ENCODE measurements at regions of chr11 and their contacts with region 1.

Region 1: GRCh38 chr11:128336203-128336602 is 251.2 kb downstream of the ETS1 start:
- DNase-seq: peak; percentile 98
- ATAC-seq: peak; percentile 52
- H3K4me3 ChIP-seq: no peak overlapping the region
- H3K27ac ChIP-seq: peak overlapping the region; percentile 96
- H3K4me1 ChIP-seq: peaks cover 51% of the 10 kb centered on the region
- H3K27me3 ChIP-seq: no peaks in the 10 kb centered on the region
- CTCF ChIP-seq: no peak

Region 2: GRCh38 chr11:128290106-128290840 is 45.9 kb before region 1 on chr11:
- CTCF ChIA-PET with region 1: no interaction called
- POLR2A ChIA-PET with region 1: interaction called, 5 read pairs
- intact Hi-C with region 1: loop called (anchors 1 kb)
- DNase-seq: peak; percentile 94
- ATAC-seq: peak; percentile 82
- H3K4me3 ChIP-seq: no peak overlapping the region
- H3K27ac ChIP-seq: peak overlapping the region; percentile 53
- H3K4me1 ChIP-seq: peaks cover 39% of the 10 kb centered on the region
- H3K27me3 ChIP-seq: no peaks in the 10 kb centered on the region
- CTCF ChIP-seq: peak; percentile 97

Region 3: DNA sequence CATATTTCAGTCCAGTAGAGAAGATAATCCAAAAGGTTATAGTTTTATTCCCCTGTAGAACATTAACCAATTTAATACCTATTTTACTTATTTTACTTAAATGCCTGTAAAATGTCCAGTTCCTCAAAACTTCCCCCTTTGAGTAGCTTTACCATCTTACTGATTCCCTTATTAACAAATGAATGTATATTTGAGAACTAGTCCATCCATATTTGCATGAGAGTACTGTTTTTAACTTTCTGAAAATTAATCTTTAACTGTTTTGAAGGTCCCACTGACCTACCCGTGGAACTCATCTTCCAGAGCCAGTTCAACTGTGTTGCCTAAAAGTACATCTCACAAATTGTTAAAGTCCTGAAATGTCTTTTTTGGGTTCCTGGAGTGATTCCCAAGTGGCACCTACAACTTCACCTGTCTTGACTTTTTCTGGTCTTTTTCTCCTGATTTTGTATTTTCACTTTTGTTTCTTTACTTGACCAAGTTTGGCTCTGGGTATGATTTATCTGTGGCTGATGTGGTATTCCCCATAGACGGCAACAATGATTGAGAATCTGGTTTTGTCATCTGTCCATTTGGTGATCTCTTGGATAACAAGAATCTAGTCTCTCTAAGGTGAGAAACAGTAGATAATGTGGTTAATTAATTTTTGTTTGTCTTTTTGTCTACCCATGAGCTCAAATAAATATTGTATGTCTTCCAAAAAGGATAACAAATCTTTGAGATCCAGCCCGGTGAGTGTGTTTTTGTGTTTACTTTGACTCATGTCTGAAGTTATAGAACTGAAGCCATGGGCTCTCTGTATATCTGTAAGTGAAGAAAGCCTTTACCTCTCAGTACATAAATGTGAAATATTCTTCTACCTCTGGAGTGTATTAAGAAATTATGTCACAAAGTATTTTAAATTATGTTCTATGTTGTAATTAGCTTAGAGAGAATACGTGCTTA is 76.9 kb after region 1 on chr11:
- CTCF ChIA-PET with region 1: no interaction called
- POLR2A ChIA-PET with region 1: interaction called, 4 read pairs
- intact Hi-C with region 1: loop called (anchors 2 kb)
- DNase-seq: peak; percentile 91
- ATAC-seq: peak; percentile 80
- H3K4me3 ChIP-seq: no peak overlapping the region
- H3K27ac ChIP-seq: peak overlapping the region; percentile 5
- H3K4me1 ChIP-seq: peaks cover 56% of the 10 kb centered on the region
- H3K27me3 ChIP-seq: no peaks in the 10 kb centered on the region
- CTCF ChIP-seq: no peak

Region 4: DNA sequence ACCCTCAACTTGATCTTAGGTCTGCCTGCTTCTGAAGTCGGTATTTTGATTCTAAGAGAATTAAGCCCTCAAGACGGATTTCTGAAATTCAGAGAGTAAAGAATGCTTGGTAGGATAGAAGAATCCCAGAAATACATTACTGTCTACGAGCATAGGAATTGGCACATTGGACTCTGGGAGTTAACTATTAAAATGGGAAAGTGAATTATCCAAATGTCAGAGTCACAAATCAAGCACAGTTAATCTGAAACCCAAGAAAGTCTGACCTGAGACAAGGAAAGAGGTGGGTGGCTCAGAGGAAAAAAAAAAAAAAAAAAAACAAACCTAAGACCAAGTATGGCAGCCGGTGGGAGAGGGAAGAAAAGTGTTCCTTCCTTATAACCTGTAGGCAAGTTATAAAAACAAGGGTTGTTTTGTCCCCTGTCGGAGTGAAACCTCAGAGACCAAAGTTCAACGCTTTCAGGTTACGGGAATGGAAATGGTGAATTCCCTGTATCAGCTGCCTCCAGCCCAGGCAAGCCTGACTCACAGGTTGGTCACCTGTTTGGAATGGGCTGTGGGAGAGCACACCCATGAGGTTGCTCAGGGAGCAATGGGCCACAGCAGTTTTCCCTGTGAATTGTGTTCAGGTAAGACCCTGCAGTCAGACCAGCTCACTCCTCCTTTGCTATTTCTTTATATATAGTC is 112.1 kb after region 1 on chr11:
- CTCF ChIA-PET with region 1: interaction called, 5 read pairs
- POLR2A ChIA-PET with region 1: interaction called, 4 read pairs
- intact Hi-C with region 1: loop called (anchors 1 kb)
- DNase-seq: peak; percentile 100
- ATAC-seq: peak; percentile 97
- H3K4me3 ChIP-seq: peak overlapping the region; percentile 43; the same call in 1 of the 2 replicates
- H3K27ac ChIP-seq: peak overlapping the region; percentile 91
- H3K4me1 ChIP-seq: peaks cover 31% of the 10 kb centered on the region
- H3K27me3 ChIP-seq: no peaks in the 10 kb centered on the region
- CTCF ChIP-seq: peak; percentile 65

Region 5: DNA sequence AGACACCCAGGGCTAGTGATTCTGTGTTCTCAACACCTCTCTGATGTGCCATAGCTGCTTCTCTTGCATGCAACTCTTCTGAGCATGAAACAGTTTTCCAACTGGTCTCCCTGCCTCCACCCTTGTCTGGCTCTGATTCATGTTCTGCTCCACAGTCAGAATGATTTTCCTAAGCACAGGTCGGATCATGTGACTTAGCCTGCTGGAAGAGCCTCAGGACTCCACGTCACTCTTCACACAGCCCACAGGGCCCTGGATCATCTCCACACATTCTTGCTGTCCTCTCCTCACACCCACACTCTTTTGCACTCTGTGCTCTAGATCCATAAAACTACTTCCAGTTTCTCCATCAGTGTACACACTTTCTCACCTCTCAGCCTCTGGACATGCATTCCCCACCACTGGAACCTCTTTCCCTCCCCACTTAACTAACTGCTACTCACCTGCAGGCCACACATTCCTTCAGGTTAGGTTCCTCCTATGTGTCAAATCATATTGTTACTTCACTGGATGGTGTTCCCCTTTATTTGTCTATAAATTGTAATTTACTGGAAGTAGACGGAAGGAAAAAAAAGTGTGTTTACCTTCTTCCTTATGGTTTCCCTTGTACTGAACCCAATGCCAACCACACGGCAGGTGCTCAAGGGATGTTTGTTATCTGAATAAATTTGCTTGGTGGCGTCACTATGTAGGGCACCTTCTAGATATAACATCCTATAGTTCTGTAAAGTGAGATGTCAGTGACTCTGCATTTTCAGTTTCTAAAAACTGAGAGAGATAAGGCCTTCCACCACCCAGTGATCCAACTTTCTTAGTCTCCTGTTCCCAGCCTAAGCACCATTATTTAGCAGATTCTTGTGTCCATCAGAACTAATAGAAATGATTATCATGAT is 117.5 kb after region 1 on chr11:
- CTCF ChIA-PET with region 1: interaction called, 5 read pairs
- POLR2A ChIA-PET with region 1: interaction called, 4 read pairs
- intact Hi-C with region 1: loop called (anchors 1 kb)
- DNase-seq: peak; percentile 88
- ATAC-seq: peak; percentile 48
- H3K4me3 ChIP-seq: no peak overlapping the region
- H3K27ac ChIP-seq: peak overlapping the region; percentile 64
- H3K4me1 ChIP-seq: peaks cover 38% of the 10 kb centered on the region
- H3K27me3 ChIP-seq: no peaks in the 10 kb centered on the region
- CTCF ChIP-seq: no peak

Region 6: DNA sequence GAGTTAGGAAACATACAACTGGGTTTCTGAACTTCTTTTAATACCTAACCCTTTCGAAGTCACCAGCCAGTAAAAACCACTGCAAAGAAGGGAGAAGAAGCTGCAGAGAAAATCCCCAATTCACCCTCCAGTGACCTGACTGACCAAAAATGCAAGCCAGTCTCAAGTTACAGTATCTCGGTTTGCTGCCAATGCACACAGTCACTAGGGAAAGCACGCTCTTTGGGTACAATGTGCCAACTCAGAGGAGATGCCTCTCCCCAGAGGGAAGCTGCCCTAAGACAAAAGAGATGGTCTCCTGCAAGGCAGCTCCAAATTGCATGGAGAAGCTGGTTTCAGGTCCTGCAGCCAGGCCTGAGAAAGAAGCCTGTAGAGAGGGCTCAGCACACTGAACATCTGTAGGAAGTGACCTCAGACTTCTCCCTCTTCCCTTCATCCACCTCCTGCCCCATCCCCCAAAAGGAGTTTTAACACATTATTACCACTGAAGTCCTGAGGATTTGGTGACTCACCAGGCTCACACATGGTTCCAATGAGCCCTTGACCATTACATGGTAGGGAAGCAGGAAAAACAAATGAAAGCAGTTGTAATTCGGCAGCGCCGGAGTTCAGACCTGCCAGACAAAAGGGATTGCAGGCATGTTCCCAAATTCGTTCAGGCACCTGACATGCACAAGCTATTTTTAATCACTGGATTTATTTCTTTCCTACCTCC is 161.0 kb after region 1 on chr11:
- CTCF ChIA-PET with region 1: no interaction called
- POLR2A ChIA-PET with region 1: interaction called, 4 read pairs
- intact Hi-C with region 1: loop called (anchors 10 kb)
- DNase-seq: peak; percentile 97
- ATAC-seq: peak; percentile 74
- H3K4me3 ChIP-seq: peak overlapping the region; percentile 62
- H3K27ac ChIP-seq: peak overlapping the region; percentile 91
- H3K4me1 ChIP-seq: peaks cover 97% of the 10 kb centered on the region
- H3K27me3 ChIP-seq: no peaks in the 10 kb centered on the region
- CTCF ChIP-seq: no peak

Measured in PC-3 (cell line).